Mammary epithelial cell (primary cell): ENCODE measurements at regions of chr3 and their contacts with region 1.

Region 1: DNA sequence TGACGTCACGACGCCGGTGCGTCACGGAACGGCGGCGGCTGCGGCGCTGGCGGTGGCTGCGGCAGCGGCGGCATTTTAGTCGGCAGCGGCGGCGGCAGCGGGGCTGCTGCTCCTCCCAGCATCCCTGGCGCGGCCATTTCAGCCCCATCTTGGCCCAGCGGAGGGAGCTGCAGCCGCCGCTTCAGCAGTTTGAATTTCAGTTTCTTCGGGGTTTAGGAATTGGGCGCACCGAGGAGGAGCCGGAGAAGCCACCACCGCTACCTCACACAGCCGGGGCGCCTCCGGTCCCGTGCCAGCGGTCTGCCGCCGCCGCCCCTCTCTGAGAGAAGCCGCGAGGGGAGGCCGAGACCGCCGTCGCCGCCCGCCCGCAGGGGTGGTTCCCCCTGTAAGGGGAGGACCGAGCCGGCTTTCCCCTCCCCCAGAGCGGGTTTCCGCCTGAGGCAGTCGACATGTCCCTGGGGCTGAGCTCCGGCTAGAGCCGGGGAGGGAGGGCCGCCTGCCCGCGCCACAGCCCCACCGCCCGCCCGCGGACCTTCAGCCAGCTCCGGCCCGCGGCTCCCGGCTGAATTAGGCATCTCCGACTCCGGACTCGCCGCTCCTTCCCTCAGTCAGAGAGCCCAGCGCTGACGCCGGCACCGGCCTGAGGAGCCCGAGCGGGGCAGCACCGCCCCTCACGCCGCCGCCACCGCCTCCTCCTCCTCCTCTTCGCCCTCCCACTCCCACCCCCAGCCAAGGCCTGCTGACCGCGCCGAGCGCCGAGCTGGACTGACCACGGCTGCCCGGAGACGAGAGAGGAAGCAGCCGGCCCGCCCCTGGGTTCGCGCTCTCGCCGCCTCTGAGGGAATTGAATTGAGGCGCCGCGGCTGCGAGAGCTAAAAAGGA is at the start of gene TSC22D2:
- DNase-seq: peak; percentile 93
- H3K4me3 ChIP-seq: peak within 1 kb of the TSS; percentile 73 to 93 (median 81)
- H3K27ac ChIP-seq: peak within 1 kb of the TSS; percentile 99
- H3K4me1 ChIP-seq: peaks cover 5% of the 10 kb centered on the region
- H3K27me3 ChIP-seq: no peaks in the 10 kb centered on the region
- CTCF ChIP-seq: peak in 1 of 2 donors; percentile 31
- total RNA-seq, gene TSC22D2: 16.3 to 38.8 TPM

Region 2: DNA sequence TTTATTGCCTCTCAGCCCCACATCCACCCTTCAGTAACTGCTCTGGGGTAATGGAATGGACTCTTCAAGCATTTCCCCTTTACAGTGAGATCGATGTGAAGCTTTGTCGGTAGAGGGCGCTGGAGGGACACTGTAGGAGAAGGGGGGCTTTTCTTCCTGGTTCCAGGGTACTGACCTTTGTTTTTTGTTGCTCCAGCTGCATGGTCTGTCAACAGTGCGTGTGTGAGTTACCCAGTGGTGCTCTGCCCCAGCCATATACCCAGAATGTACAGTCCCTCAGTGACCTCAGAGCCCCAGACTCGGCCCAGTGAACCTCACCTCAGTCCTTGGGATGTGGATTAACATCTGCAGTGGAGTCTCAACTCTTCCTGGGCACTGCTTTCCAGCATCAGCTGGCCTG is 180.6 kb before region 1 on chr3:
- CTCF ChIA-PET with region 1: no interaction called
- dilution Hi-C with region 1: no loop called
- in situ Hi-C with region 1: loop called in 1 of 2 experiments (anchors 5 kb)
- intact Hi-C with region 1: loop called (anchors 1 kb)
- DNase-seq: no peak
- H3K4me3 ChIP-seq: no peak overlapping the region
- H3K27ac ChIP-seq: no peak overlapping the region
- H3K4me1 ChIP-seq: peaks cover 5% of the 10 kb centered on the region
- H3K27me3 ChIP-seq: no peaks in the 10 kb centered on the region
- CTCF ChIP-seq: peak; percentile 82 to 83

Region 3: DNA sequence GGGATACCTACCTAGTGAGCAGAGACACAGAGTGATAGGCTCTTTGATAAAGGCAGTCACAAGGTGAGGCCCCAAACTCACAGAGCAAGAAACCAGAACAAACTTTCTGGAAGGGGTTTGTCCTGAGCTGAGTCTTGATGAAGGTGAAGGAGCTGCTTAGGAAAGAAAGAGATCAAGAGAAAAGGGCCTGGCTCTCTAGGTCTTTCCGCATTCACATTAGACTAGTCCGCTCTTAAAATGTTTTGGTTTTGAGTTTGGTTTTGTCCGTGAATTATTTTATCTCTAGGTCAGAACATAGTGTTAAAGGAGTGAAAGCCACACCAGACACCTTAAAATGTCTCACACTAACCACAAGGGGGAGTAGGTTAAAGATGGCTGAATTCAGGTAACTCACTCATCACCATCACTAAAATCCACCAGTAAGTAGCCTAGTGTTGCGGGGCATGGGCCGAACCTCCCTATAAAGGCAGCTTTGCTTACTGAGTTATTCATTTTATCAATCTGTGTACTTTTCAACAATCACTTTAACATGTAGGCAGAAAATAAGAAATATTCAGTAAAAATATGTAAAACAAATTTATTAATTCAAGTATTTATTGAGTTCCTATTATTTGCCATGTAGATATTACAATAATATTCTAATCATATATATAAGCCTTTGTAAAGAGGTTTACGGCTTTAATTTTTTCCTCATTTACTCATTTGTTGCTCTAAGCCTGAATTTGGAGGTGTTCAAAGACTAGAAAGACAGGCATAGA is 121.9 kb before region 1 on chr3:
- CTCF ChIA-PET with region 1: interaction called, 4 read pairs
- dilution Hi-C with region 1: no loop called
- in situ Hi-C with region 1: loop called in 1 of 2 experiments (anchors 10 kb)
- intact Hi-C with region 1: loop called (anchors 1 kb)
- DNase-seq: peak; percentile 56
- H3K4me3 ChIP-seq: no peak overlapping the region
- H3K27ac ChIP-seq: no peak overlapping the region
- H3K4me1 ChIP-seq: peaks cover 4% of the 10 kb centered on the region
- H3K27me3 ChIP-seq: no peaks in the 10 kb centered on the region
- CTCF ChIP-seq: peak; percentile 57 to 72

Region 4: DNA sequence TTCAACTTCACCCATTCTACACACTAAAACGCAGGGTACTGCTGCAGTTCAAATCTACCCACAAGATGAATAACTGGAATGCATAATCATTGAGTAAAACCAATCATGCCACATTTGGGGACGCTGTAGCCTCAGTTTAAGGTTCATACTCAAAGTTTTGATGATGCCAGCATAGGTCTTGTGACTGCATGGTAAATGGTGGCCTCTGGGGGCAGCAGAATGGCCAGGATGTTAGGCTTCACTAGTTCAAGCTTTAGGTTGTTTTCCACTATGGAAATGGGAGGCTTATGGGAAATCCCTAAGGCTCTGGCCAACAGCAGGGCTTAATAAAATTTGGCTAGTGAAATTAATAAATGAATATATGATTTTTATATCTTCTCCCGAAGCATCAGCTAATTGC is 104.7 kb before region 1 on chr3:
- CTCF ChIA-PET with region 1: interaction called, 5 read pairs
- dilution Hi-C with region 1: loop called (anchors 5 kb)
- in situ Hi-C with region 1: loop called in 1 of 2 experiments (anchors 10 kb)
- intact Hi-C with region 1: loop called (anchors 5 kb)
- DNase-seq: no peak
- H3K4me3 ChIP-seq: no peak overlapping the region
- H3K27ac ChIP-seq: no peak overlapping the region
- H3K4me1 ChIP-seq: peaks cover 14% of the 10 kb centered on the region
- H3K27me3 ChIP-seq: no peaks in the 10 kb centered on the region
- CTCF ChIP-seq: peak; percentile 40 to 47

Region 5: DNA sequence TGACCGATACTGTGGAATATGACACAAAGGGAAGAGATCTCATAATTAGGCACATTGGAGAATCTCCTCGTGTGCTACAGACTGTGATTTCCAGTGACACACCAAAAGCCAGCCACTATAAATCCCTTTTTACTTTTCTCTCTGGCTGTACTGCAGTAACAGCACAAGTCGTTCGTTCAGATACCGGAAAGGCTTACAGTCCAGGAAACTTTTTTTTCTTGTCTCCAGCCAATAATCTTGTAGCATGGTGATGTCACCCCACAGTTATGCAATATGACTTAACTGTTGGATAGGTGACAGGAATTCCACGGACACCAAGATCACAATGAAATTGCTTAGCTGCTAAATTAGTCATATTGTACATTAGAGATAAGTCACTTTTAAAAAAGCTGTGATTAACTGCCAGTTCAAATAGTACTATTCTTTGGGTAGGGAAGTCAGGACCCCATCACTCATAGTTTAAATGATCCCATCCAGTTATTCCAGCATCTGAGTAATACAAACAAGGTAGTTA is 36.7 kb before region 1 on chr3:
- CTCF ChIA-PET with region 1: no interaction called
- dilution Hi-C with region 1: no loop called
- in situ Hi-C with region 1: loop called in 1 of 2 experiments (anchors 5 kb)
- intact Hi-C with region 1: loop called (anchors 1 kb)
- DNase-seq: peak; percentile 98
- H3K4me3 ChIP-seq: peak overlapping the region; percentile 35 to 57 (median 44)
- H3K27ac ChIP-seq: peak overlapping the region; percentile 96
- H3K4me1 ChIP-seq: peaks cover 23% of the 10 kb centered on the region
- H3K27me3 ChIP-seq: no peaks in the 10 kb centered on the region
- CTCF ChIP-seq: no peak

Region 6: GRCh38 chr3:150469031-150469942 is 60.8 kb after region 1 on chr3:
- CTCF ChIA-PET with region 1: interaction called, 3 read pairs
- dilution Hi-C with region 1: no loop called
- in situ Hi-C with region 1: no loop called
- intact Hi-C with region 1: loop called (anchors 1 kb)
- DNase-seq: peak; percentile 98
- H3K4me3 ChIP-seq: peak overlapping the region; percentile 10 to 33 (median 33)
- H3K27ac ChIP-seq: peak overlapping the region; percentile 94
- H3K4me1 ChIP-seq: peaks cover 23% of the 10 kb centered on the region
- H3K27me3 ChIP-seq: no peaks in the 10 kb centered on the region
- CTCF ChIP-seq: no peak

Region 7: GRCh38 chr3:150546226-150547044 is 138.0 kb after region 1 on chr3 and contains the starts of genes EIF2A and SERP1:
- CTCF ChIA-PET with region 1: no interaction called
- dilution Hi-C with region 1: no loop called
- in situ Hi-C with region 1: no loop called
- intact Hi-C with region 1: loop called (anchors 2 kb)
- DNase-seq: peak; percentile 99
- H3K4me3 ChIP-seq: peak within 1 kb of the TSS; percentile 96 to 99 (median 97)
- H3K27ac ChIP-seq: peak within 1 kb of the TSS; percentile 96
- H3K4me1 ChIP-seq: peaks cover 14% of the 10 kb centered on the region
- H3K27me3 ChIP-seq: no peaks in the 10 kb centered on the region
- CTCF ChIP-seq: no peak
- total RNA-seq, gene EIF2A: 76.6 to 140 TPM
- total RNA-seq, gene SERP1: 95.2 to 140 TPM

Region 8: GRCh38 chr3:151062611-151063010 is 654.1 kb after region 1 on chr3:
- CTCF ChIA-PET with region 1: no interaction called
- dilution Hi-C with region 1: no loop called
- in situ Hi-C with region 1: no loop called
- intact Hi-C with region 1: no loop called
- DNase-seq: no peak
- H3K4me3 ChIP-seq: no peak overlapping the region
- H3K27ac ChIP-seq: no peak overlapping the region
- H3K4me1 ChIP-seq: no peaks in the 10 kb centered on the region
- H3K27me3 ChIP-seq: peaks cover 3% of the 10 kb centered on the region
- CTCF ChIP-seq: no peak